Panc1 (cell line): ENCODE measurements at regions of chr7 and their contacts with region 1.

Region 1: DNA sequence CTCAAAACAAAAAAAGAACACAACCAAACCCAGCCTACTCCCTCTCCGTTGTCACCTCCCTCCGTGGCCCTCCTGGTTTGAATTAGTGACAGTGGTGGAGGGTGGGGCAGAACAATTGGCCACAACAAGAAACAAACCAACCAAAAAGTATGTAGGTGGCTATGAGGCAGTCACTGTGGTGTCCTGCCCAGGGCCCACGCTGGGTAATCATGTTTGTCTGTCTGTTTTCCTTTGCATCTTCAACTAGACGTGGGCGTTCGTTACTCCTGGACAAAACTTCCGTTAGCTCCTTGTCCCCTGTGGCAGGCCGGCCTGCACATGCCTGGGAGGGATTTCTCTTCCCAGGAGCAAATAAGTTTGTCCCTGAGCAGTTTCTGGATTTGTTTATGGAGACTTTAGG is 78.4 kb downstream of the XRCC2 start:
- DNase-seq: no peak
- ATAC-seq: no peak
- H3K4me3 ChIP-seq: no peak overlapping the region
- H3K27ac ChIP-seq: no peak overlapping the region
- H3K4me1 ChIP-seq: no peaks in the 10 kb centered on the region
- H3K27me3 ChIP-seq: no peaks in the 10 kb centered on the region
- CTCF ChIP-seq: no peak

Region 2: GRCh38 chr7:152173372-152174070 is 424.0 kb before region 1 on chr7:
- CTCF ChIA-PET with region 1: no interaction called
- POLR2A ChIA-PET with region 1: no interaction called
- in situ Hi-C with region 1: no loop called
- intact Hi-C with region 1: no loop called
- DNase-seq: no peak
- ATAC-seq: no peak
- H3K4me3 ChIP-seq: no peak overlapping the region
- H3K27ac ChIP-seq: no peak overlapping the region
- H3K4me1 ChIP-seq: no peaks in the 10 kb centered on the region
- H3K27me3 ChIP-seq: no peaks in the 10 kb centered on the region
- CTCF ChIP-seq: no peak; the same call in 1 of the 2 replicates

Region 3: DNA sequence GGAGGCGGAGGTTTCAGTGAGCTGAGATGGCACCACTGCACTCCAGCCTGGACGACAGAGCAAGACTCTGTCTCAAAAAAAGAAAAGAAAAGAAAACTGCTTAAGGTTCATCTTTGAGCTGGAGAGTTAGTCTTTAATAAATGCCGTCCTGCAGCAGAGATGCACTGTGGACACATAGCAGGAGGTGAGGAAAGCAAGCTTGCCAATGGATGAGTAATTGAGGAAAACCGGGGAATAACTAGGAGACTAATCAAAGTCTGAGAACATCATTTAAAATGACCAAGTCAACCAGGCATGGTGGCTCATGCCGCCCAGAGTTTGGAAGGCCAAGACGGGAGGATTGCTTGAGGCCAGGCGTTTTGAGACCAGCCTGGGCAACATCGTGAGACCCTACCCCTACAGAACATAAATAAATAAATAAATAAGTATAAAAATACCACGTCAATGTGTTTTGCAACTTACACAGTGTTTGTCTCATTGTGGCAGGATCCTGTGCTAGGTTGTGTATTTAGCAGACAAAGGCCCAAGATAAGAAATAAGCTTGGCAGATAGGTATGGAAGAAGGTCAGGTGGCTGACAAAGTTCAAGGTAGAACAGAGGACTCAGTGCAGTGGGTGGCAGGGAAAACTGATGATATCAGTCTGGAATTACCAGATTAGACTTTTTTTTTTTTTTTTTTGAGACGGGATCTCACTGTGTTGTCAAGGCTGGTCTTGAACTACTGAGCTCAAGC is 46.0 kb before region 1 on chr7:
- CTCF ChIA-PET with region 1: no interaction called
- POLR2A ChIA-PET with region 1: interaction called, 12 read pairs
- in situ Hi-C with region 1: no loop called
- intact Hi-C with region 1: no loop called
- DNase-seq: no peak
- ATAC-seq: no peak
- H3K4me3 ChIP-seq: no peak overlapping the region
- H3K27ac ChIP-seq: no peak overlapping the region
- H3K4me1 ChIP-seq: no peaks in the 10 kb centered on the region
- H3K27me3 ChIP-seq: no peaks in the 10 kb centered on the region
- CTCF ChIP-seq: no peak

Region 4: DNA sequence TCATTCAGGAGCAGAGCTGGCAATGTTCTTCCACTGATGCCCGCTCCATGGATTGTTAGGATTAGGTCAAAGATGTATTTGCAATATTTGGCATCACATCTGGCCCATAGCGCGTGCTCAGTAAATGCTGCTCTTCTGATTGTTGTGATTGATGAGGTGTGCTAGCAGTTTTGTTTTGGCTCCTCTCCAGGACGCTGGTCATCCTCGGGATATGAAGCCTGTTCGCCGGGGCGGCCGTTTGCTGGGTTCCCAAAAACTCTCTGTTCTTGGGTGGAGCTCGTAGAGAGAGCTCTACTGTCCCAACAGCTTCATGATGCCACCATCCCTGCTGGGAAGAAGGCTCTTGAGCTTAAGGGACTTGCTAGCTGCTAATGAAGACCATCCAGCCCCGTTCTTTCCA is 18.4 kb before region 1 on chr7:
- CTCF ChIA-PET with region 1: no interaction called
- POLR2A ChIA-PET with region 1: no interaction called
- in situ Hi-C with region 1: no loop called
- intact Hi-C with region 1: no loop called
- DNase-seq: no peak
- ATAC-seq: no peak
- H3K4me3 ChIP-seq: no peak overlapping the region
- H3K27ac ChIP-seq: no peak overlapping the region
- H3K4me1 ChIP-seq: peaks cover 3% of the 10 kb centered on the region; the same call in 1 of the 2 replicates
- H3K27me3 ChIP-seq: no peaks in the 10 kb centered on the region
- CTCF ChIP-seq: no peak